ENCODE measurements at regions of chr20 and their contacts with region 1.

Region 1: DNA sequence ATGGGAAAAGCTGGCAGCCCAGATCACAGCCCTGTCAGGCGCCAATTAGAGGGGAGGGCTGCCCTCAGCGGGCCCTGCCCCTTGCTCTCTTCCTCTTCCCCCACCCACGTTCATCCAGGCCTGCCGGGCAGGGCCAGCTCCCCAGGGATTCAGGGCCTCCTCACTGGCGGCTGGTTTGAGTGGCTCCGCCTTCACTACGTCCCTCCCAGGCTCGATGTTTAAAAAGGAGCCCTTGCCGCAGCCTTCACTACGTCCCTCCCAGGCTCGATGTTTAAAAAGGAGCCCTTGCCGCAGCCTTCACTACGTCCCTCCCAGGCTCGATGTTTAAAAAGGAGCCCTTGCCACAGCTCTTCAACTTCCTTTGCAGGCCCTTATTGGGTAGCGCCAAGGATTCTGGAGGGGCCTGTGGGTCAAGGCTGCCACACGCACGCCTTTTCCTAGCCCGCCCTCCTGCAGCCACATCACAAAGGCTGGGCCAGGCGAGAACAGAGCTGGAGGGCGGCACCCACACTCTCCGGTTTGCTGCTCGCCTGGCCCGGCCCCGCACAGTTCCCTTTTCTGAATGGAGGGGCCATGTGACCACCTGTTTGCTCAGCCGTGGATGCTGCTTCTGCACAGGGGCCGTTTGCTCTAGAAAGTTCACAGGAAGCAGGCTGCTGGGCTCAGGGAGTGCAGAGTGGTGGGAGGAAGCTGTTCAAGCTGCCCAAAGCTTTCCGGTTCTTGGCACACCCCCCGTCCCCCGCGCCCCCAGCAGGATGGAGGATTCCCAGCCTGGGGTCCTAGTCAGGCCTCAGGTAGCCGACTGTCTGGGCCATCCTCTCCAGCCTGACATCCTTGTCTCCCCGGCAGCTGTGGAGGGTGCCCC is 1.6 kb downstream of the SLC17A9 start:
- DNase-seq: peak; percentile 48 to 88 (median 68)
- ATAC-seq: peak; percentile 87
- H3K4me3 ChIP-seq: peak overlapping the region; percentile 46
- H3K4me3 Mint-ChIP-seq: peak overlapping the region; percentile 88
- H3K27ac ChIP-seq: peak overlapping the region; percentile 17 to 78
- H3K27ac Mint-ChIP-seq: peak overlapping the region; percentile 90
- H3K4me1 ChIP-seq: peaks cover 49% of the 10 kb centered on the region
- H3K4me1 Mint-ChIP-seq: peaks cover 31% of the 10 kb centered on the region
- H3K27me3 ChIP-seq: no peaks in the 10 kb centered on the region
- H3K27me3 Mint-ChIP-seq: no peaks in the 10 kb centered on the region
- CTCF ChIP-seq: no peak

Region 2: DNA sequence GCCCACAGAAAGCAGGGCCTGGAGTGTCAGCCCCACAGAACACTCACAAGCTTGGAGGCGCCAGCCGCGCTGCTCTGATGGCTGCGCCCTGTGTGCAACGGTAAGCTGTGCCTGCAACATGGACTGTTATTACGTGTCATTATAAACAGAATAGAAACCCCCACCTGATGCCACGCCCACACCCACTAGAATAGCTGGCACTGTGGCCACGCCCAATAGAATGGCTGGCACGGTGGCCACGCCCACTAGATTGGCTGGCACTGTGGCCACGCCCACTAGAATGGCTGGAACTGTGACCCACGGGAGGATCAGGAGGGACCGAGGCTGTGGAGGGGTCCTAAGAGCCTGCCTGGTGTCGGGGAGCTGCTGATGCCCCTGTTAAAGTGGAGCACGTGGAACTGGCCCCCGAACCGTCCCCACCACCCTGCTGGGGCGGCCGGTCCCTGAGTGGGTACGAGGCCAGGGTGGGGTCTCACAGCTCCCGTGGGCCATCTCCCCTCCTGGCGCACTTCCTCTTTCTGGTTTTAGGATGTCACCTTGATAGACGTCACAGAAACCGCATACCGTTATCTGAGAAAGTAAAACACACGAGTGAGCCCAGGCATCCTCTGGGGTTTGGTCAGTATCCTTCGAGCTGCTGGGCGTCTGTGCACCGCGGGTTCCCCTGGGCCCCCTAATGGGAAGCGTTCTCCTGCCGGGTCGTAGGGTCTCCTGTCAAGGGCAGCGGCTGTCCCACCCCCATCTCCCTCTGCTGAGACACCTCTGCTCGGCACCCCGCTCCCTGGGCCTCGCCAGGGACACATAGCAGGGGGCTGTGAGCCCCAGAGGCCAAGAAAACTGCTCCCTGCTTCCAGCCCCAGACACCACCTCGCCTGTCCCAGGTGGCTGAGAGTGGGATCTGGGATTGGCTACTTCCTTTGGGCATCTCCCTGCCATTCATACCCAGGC is 23.8 kb after region 1 on chr20:
- CTCF ChIA-PET with region 1: no interaction called
- POLR2A ChIA-PET with region 1: interaction called, 21 read pairs
- intact Hi-C with region 1: no loop called
- DNase-seq: peak; percentile 49 to 93 (median 78)
- ATAC-seq: peak; percentile 83
- H3K4me3 ChIP-seq: peak overlapping the region; percentile 49
- H3K4me3 Mint-ChIP-seq: peak overlapping the region; percentile 83
- H3K27ac ChIP-seq: no peak overlapping the region
- H3K27ac Mint-ChIP-seq: peak overlapping the region; percentile 80
- H3K4me1 ChIP-seq: peaks cover 61% of the 10 kb centered on the region
- H3K4me1 Mint-ChIP-seq: peaks cover 38% of the 10 kb centered on the region
- H3K27me3 ChIP-seq: peaks cover 67 to 74% of the 10 kb centered on the region in 2 experiments
- H3K27me3 Mint-ChIP-seq: peaks cover 74% of the 10 kb centered on the region
- CTCF ChIP-seq: no peak